ENCODE measurements at regions of chr9 and their contacts with region 1.

Region 1: GRCh38 chr9:71783120-71783530 is 14.8 kb upstream of the CEMIP2 start:
- DNase-seq: no peak
- ATAC-seq: peak; percentile 89
- H3K4me3 ChIP-seq: no peak overlapping the region; the same call in 1 of the 2 replicates
- H3K27ac ChIP-seq: no peak overlapping the region
- H3K4me1 ChIP-seq: peaks cover 23% of the 10 kb centered on the region
- H3K27me3 ChIP-seq: no peaks in the 10 kb centered on the region
- CTCF ChIP-seq: peak in 2 of 3 experiments; percentile 35 to 37; a peak in 3 of 6 replicates
- EP300 ChIP-seq: peak; percentile 79 to 95; a peak in 3 of 4 replicates
- POLR2A ChIP-seq: 0 out of 2 replicates have a peak, but pooled peaks have one; percentile 24
- RAD21 ChIP-seq: peak; percentile 49

Region 2: GRCh38 chr9:71001780-71002386 is 781.2 kb before region 1 on chr9:
- CTCF ChIA-PET with region 1: no interaction called
- POLR2A ChIA-PET with region 1: no interaction called
- RAD21 ChIA-PET with region 1: no interaction called
- SMC1A ChIA-PET with region 1: no interaction called
- in situ Hi-C with region 1: no loop called
- intact Hi-C with region 1: no loop called
- DNase-seq: no peak
- ATAC-seq: peak; percentile 74
- H3K4me3 ChIP-seq: no peak overlapping the region
- H3K27ac ChIP-seq: no peak overlapping the region
- H3K4me1 ChIP-seq: no peaks in the 10 kb centered on the region
- H3K27me3 ChIP-seq: no peaks in the 10 kb centered on the region
- CTCF ChIP-seq: peak; percentile 52 to 56 (median 54)
- EP300 ChIP-seq: no peak
- POLR2A ChIP-seq: no peak
- RAD21 ChIP-seq: peak; percentile 46

Region 3: GRCh38 chr9:71795097-71795813 is 12.1 kb after region 1 on chr9:
- CTCF ChIA-PET with region 1: interaction called, 8 read pairs
- POLR2A ChIA-PET with region 1: interaction called, 7 read pairs
- RAD21 ChIA-PET with region 1: interaction called, 4 read pairs
- SMC1A ChIA-PET with region 1: interaction called, 61 read pairs
- in situ Hi-C with region 1: no loop called
- intact Hi-C with region 1: loop called (anchors 2 kb)
- DNase-seq: peak; percentile 91
- ATAC-seq: peak; percentile 89
- H3K4me3 ChIP-seq: no peak overlapping the region
- H3K27ac ChIP-seq: no peak overlapping the region
- H3K4me1 ChIP-seq: peaks cover 32% of the 10 kb centered on the region
- H3K27me3 ChIP-seq: no peaks in the 10 kb centered on the region
- CTCF ChIP-seq: no peak
- EP300 ChIP-seq: peak in 1 of 2 experiments; percentile 31; a peak in 1 of 4 replicates
- POLR2A ChIP-seq: no peak
- RAD21 ChIP-seq: no peak

Measured in GM12878 (cell line).